ENCODE measurements at regions of chrX and their contacts with region 1.

Region 1: DNA sequence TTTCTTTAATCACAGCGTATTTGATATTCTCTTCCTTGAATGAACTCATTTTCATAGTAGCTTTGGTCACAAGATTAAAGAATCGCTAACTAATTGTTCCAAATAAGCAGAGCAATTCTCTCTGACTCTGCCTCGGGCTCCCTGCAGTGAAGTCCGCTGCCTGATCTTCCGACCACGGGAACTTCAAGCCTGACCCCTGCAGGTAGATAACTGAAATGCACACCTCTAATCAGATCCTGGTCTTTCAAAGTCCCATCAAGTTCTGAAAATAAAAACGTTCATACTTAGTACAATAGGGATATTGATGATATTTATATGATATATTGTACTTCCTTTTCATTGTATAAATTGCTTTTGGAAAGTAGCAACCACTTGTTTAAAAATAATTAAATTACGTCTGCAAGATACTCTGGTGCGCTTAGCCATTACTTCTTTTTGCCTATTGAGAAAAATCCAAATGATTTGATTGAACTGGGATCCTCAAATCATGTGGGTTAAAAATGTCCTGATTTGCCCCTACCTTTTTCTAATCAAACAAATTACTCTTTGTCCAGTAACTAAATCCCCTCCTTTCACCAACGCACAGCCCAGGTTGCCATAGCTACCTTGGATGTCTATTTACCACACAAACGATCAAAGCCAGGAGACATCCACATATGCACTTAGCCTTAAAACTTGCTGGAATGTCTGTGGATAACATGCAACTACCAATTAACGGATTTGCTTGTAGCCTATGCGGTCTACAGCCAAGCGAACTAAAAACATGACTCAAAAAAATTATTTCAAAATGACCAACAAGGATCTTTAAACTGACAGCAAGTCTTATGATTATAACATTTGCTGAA is 4.2 kb downstream of the MID1 start:
- DNase-seq: peak; percentile 37
- ATAC-seq: peak; percentile 40 to 41

Region 2: GRCh38 chrX:10199212-10199611 is 416.9 kb before region 1 on chrX:
- intact Hi-C with region 1: loop called in 1 of 2 experiments (anchors 5 kb)
- DNase-seq: peak; percentile 59
- ATAC-seq: peak; percentile 41 to 48

Region 3: DNA sequence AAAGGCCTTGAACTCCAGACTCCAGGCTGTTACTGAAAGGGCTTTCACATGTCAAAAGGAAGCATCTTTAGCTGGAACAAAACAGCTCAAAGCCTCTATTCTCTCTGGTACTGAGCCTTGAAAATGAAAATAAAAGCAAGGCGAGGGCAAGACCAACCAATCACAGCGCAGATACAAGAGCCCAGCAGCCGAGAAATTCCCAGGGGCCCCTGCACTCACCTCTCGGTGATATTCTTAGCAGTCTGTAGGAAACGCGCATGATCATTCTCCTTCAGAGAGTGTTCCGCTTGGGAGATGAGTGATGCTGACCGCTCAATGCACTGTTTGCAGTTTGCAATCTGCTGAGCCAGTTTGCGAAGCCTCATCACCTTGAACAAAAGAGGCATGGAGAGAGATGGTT is 133.9 kb before region 1 on chrX:
- intact Hi-C with region 1: loop called in 1 of 2 experiments (anchors 10 kb)
- DNase-seq: peak; percentile 30
- ATAC-seq: peak; percentile 35 to 51

Measured in left cardiac atrium (tissue), 4 donors.